Tibial artery (tissue), 4 donors: ENCODE measurements at regions of chr17 and their contacts with region 1.

Region 1: GRCh38 chr17:5249615-5250014 is 15.0 kb upstream of the SCIMP start:
- DNase-seq: peak in 1 of 2 donors; percentile 59
- H3K4me3 ChIP-seq: no peak overlapping the region
- H3K27ac ChIP-seq: no peak overlapping the region
- H3K4me1 ChIP-seq: no peaks in the 10 kb centered on the region
- H3K27me3 ChIP-seq: peaks cover 0 to 9% of the 10 kb centered on the region in 2 donors
- CTCF ChIP-seq: peak; percentile 55 to 70

Region 2: DNA sequence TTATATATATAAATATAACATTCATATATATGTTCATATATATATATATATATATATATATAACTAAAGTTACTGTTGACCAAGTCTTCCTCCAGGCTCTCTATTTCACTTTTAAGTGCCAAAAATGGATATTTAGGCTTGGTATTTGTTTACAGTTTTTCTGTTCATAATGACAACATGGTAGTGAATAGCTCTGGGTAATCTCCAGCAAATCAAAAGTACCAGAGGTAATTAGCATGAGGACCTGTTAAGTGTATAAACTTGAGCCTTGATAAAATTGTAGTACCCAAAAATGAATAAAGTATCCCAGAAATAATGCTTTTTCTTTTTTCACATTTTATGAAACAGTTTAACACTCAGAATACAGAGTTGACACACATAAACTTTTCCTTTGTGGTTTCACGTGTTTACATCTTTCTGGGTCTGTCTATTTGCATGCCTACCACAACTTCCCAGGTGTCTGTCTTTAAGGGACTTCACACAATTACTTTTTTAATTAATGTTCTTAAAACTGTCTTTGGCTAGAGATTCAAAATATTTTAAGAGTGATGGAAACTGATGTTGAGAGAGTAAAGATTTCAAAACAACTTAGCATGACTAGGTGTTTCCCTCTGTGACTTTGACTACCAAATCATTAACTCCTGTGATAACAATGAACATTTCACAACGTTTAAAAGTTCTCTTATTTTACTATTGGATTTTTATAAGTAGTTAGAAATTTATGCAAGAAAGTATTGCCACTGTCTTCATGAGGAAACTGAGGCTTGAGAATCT is 80.4 kb after region 1 on chr17:
- intact Hi-C with region 1: no loop called
- DNase-seq: no peak
- H3K4me3 ChIP-seq: no peak overlapping the region
- H3K27ac ChIP-seq: no peak overlapping the region
- H3K4me1 ChIP-seq: peaks cover 0 to 5% (median 0%) of the 10 kb centered on the region in 4 donors
- H3K27me3 ChIP-seq: no peaks in the 10 kb centered on the region
- CTCF ChIP-seq: no peak

Region 3: GRCh38 chr17:5444209-5444608 is 194.6 kb after region 1 on chr17:
- intact Hi-C with region 1: loop called (anchors 5 kb)
- DNase-seq: no peak
- H3K4me3 ChIP-seq: no peak overlapping the region
- H3K27ac ChIP-seq: no peak overlapping the region
- H3K4me1 ChIP-seq: peaks cover 0 to 6% (median 5%) of the 10 kb centered on the region in 4 donors
- H3K27me3 ChIP-seq: no peaks in the 10 kb centered on the region
- CTCF ChIP-seq: no peak